ENCODE measurements at regions of chr12 and their contacts with region 1.

Region 1: GRCh38 chr12:87667378-87667777 is 361.8 kb downstream of the C12orf50 start:
- DNase-seq: peak; percentile 61
- ATAC-seq: peak; percentile 96
- H3K4me3 ChIP-seq: no peak overlapping the region
- H3K27ac ChIP-seq: no peak overlapping the region
- H3K4me1 ChIP-seq: no peaks in the 10 kb centered on the region
- H3K27me3 ChIP-seq: no peaks in the 10 kb centered on the region
- CTCF ChIP-seq: peak; percentile 70

Region 2: DNA sequence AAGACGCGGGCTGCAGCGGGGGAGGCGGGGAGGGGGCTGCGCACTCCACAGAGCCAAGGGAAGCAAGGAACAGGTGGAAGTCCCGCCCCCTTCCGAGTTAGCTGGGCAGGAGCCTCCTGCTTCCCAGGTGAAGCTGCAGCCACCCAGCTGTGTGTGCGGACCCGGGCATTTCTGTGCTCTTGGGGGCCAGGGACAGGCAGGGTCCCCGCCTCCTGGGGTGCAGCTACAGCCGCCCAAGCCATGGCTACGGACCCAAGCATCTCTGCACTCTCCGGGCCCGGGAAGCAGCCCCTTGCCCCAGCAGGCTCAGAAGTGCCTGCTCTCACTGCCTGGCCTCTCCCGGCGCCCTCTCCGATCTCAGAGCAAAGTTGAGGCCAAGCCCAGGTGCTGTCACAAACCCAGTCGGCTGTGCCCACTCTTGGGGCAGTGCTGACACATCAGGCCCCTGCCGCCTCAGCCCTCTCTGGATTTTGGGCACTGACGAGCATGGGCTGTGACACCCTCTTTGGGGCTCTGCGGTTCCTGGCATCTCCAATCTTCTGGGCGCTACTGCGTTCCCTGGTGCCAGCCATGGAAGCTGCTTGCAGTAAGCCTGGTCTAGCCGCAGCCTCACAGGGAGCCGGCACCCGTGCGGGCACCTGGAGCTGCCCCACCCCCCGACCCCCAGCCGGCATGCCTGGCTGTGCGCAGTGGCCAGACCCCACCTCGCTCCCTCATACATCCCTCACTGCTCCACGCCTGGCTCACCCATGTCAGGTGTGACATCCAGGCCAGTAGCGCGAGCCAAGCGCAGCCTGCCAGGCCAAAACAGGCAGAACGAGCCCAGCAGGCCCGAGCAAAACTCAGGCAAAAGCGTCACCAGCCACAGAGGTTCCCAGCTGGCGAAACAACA is 1402.7 kb before region 1 on chr12:
- CTCF ChIA-PET with region 1: no interaction called
- POLR2A ChIA-PET with region 1: no interaction called
- intact Hi-C with region 1: loop called (anchors 10 kb)
- DNase-seq: peak; percentile 68
- ATAC-seq: peak; percentile 81
- H3K4me3 ChIP-seq: peak overlapping the region; percentile 63
- H3K27ac ChIP-seq: peak overlapping the region; percentile 39
- H3K4me1 ChIP-seq: peaks cover 13% of the 10 kb centered on the region; the same call in 1 of the 2 replicates
- H3K27me3 ChIP-seq: no peaks in the 10 kb centered on the region
- CTCF ChIP-seq: no peak

Region 3: DNA sequence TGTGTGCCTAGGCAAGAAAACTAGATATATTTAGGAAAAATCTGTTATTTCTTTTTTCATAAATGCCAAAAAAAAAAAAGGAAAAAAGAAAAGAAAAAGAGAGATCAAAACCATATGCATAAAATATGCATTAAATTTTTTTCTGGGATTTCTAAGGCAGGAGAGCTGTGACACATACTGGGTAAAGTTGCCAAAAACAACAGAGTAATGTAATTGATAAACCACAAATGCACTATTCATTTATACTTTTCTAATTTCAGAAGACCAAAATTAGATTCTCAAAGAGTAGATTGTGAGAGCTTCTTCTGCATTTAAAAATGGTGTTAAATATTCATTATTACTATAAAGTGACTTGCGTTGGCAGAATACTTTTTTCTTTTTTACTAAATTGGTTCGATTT is 737.4 kb before region 1 on chr12:
- CTCF ChIA-PET with region 1: no interaction called
- POLR2A ChIA-PET with region 1: no interaction called
- intact Hi-C with region 1: loop called (anchors 10 kb)
- DNase-seq: no peak
- ATAC-seq: no peak
- H3K4me3 ChIP-seq: no peak overlapping the region
- H3K27ac ChIP-seq: no peak overlapping the region
- H3K4me1 ChIP-seq: no peaks in the 10 kb centered on the region
- H3K27me3 ChIP-seq: no peaks in the 10 kb centered on the region
- CTCF ChIP-seq: no peak

Region 4: DNA sequence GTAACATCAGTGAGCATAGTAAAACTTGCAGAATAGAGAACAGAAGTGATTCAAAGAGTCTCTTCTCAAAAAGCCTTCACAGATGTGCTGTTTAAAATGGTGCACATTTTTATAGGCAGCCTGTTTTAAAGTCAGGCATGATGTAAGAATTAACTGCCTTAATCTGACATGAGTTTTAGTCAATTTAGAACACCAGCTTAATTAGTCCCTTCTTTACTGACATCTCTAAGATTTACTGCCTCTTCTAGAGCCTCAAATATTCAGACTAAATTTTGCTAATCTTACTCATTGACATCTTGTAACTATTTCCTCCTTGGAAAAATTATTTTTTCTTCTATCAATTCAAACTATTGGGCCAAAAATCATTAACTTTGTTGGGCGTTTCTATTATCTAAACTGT is 420.7 kb before region 1 on chr12:
- CTCF ChIA-PET with region 1: no interaction called
- POLR2A ChIA-PET with region 1: no interaction called
- intact Hi-C with region 1: loop called (anchors 10 kb)
- DNase-seq: no peak
- ATAC-seq: no peak
- H3K4me3 ChIP-seq: no peak overlapping the region
- H3K27ac ChIP-seq: 0 out of 2 replicates have a peak overlapping the region, but pooled peaks have one; percentile 60
- H3K4me1 ChIP-seq: peaks cover 16% of the 10 kb centered on the region
- H3K27me3 ChIP-seq: no peaks in the 10 kb centered on the region
- CTCF ChIP-seq: no peak

Region 5: GRCh38 chr12:87344699-87345098 is 322.7 kb before region 1 on chr12:
- CTCF ChIA-PET with region 1: no interaction called
- POLR2A ChIA-PET with region 1: no interaction called
- intact Hi-C with region 1: loop called (anchors 1 kb)
- DNase-seq: peak; percentile 55
- ATAC-seq: no peak
- H3K4me3 ChIP-seq: no peak overlapping the region
- H3K27ac ChIP-seq: no peak overlapping the region
- H3K4me1 ChIP-seq: peaks cover 25% of the 10 kb centered on the region
- H3K27me3 ChIP-seq: no peaks in the 10 kb centered on the region
- CTCF ChIP-seq: peak; percentile 72

Region 6: DNA sequence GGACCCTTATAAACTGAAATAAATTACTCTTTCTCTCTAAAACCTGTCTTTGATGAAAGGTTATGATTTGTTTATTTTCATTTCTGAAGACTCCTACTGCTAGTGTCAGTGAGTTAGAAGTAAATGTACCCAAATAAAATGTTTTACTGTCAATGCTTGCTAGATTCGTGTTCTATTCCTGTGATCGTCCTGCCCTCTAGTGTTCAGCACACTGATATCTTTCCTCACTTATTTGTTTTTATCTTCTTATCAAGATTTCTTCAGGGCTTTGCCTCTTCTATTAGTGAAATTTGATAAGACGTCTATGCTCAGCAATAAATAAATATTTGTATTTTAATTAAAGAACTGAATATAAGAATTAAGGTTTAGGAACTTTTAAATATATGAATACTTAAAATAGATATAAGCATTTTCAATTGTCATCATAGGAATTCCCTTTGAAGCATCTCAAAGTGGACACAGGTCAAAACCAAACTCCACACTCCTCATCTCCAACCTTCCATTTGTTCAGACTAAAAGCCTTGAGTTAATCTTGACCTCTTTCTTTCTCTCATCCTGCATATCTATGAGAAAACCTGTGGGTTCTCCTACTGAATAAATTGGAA is 286.0 kb after region 1 on chr12:
- CTCF ChIA-PET with region 1: no interaction called
- POLR2A ChIA-PET with region 1: no interaction called
- intact Hi-C with region 1: loop called (anchors 5 kb)
- DNase-seq: peak; percentile 53
- ATAC-seq: peak; percentile 66; the same call in 1 of the 2 replicates
- H3K4me3 ChIP-seq: no peak overlapping the region
- H3K27ac ChIP-seq: no peak overlapping the region
- H3K4me1 ChIP-seq: no peaks in the 10 kb centered on the region
- H3K27me3 ChIP-seq: no peaks in the 10 kb centered on the region
- CTCF ChIP-seq: peak; percentile 81

Measured in PC-3 (cell line).